Pancreas (tissue), 10 donors: ENCODE measurements at regions of chr17 and their contacts with region 1.

Region 1: DNA sequence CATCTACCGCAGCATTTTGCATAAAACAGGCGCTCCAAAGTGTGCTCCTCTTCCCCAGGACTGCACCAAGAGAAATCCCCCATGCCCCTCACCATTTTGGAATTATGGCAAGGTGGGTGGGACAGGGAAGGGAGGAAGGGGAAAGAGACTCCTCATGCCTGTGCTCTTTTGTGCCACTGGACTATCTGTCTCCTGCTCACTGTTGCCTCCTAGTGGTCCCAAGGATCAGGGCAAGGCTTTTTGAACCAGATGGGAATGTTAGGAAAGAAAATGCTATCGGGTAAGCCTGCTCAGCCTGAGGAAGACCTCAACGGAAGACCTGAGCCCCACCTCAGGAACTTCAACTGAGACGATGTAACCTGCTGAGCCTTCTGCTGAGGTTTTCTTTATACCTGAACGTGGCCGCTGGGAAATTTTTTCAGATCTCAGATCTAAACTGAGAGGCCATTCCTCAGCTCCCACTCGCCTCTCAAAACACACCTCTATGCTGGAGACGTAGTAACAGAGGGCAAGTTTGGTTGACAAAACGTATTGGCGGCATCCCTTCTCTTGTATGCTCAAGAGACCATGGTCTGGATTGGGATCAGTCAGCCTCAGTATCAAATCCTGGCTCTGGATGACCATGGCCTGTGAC is 58.3 kb downstream of the SPACA3 start:
- DNase-seq: peak in 5 of 6 donors; percentile 23 to 60 (median 32)
- ATAC-seq: peak in 3 of 4 donors; percentile 46 to 85 (median 70)
- H3K4me3 ChIP-seq: no peak overlapping the region
- H3K27ac ChIP-seq: no peak overlapping the region
- H3K4me1 ChIP-seq: no peaks in the 10 kb centered on the region
- H3K27me3 ChIP-seq: no peaks in the 10 kb centered on the region
- CTCF ChIP-seq: peak; percentile 71 to 86 (median 78)

Region 2: GRCh38 chr17:32960506-32961214 is 89.2 kb before region 1 on chr17:
- intact Hi-C with region 1: no loop called
- DNase-seq: no peak
- ATAC-seq: peak in 3 of 4 donors; percentile 16 to 47 (median 31)
- H3K4me3 ChIP-seq: no peak overlapping the region
- H3K27ac ChIP-seq: no peak overlapping the region
- H3K4me1 ChIP-seq: peaks cover 13 to 20% (median 13%) of the 10 kb centered on the region in 3 donors
- H3K27me3 ChIP-seq: no peaks in the 10 kb centered on the region
- CTCF ChIP-seq: no peak

Region 3: GRCh38 chr17:33292184-33292980 is 242.5 kb after region 1 on chr17:
- intact Hi-C with region 1: loop called in 1 of 3 experiments (anchors 10 kb)
- DNase-seq: peak in 3 of 6 donors; percentile 15 to 62 (median 60)
- ATAC-seq: peak in 3 of 4 donors; percentile 43 to 74 (median 48)
- H3K4me3 ChIP-seq: peak overlapping the region in 2 of 4 donors; percentile 20 to 35
- H3K27ac ChIP-seq: no peak overlapping the region
- H3K4me1 ChIP-seq: peaks cover 0 to 5% (median 0%) of the 10 kb centered on the region in 3 donors
- H3K27me3 ChIP-seq: peaks cover 0 to 20% (median 2%) of the 10 kb centered on the region in 4 donors
- CTCF ChIP-seq: no peak